IMR-90 (cell line): ENCODE measurements at regions of chr3 and their contacts with region 1.

Region 1: GRCh38 chr3:188154014-188154808 is at the start of gene LPP:
- DNase-seq: peak; percentile 77
- ATAC-seq: peak; percentile 86
- H3K4me3 ChIP-seq: peak within 1 kb of the TSS; percentile 83
- H3K27ac ChIP-seq: peak within 1 kb of the TSS; percentile 97
- H3K4me1 ChIP-seq: peaks cover 30% of the 10 kb centered on the region
- H3K27me3 ChIP-seq: no peaks in the 10 kb centered on the region
- CTCF ChIP-seq: 0 out of 2 replicates have a peak, but pooled peaks have one; percentile 4
- POLR2A ChIP-seq: no peak; the same call in 1 of the 2 replicates
- RAD21 ChIP-seq: peak; percentile 24; the same call in 1 of the 2 replicates
- total RNA-seq, gene LPP: 111 and 130 TPM in 2 replicates

Region 2: DNA sequence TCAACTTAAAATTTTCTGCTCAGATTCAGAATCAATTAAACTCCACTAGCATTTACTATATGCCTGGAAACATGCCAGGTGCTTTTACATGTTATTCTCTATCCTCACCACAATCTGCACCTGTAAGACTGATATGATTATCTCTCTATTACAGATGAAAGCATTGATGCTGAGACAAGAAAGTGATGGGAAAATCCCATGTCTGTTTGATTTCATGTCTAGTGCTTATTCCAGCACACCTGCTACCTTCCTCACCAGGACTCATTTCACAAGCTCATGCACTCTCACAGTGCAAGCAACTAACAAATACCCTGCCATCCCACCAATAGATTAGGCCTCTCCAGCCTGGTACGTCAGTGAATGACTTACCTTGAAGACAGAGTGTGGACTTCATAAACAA is 384.0 kb before region 1 on chr3:
- CTCF ChIA-PET with region 1: no interaction called
- POLR2A ChIA-PET with region 1: no interaction called
- dilution Hi-C with region 1: no loop called
- in situ Hi-C with region 1: no loop called
- intact Hi-C with region 1: no loop called
- DNase-seq: no peak
- ATAC-seq: no peak
- H3K4me3 ChIP-seq: no peak overlapping the region
- H3K27ac ChIP-seq: no peak overlapping the region
- H3K4me1 ChIP-seq: peaks cover 3% of the 10 kb centered on the region; the same call in 1 of the 2 replicates
- H3K27me3 ChIP-seq: no peaks in the 10 kb centered on the region
- CTCF ChIP-seq: no peak
- POLR2A ChIP-seq: no peak
- RAD21 ChIP-seq: no peak

Region 3: DNA sequence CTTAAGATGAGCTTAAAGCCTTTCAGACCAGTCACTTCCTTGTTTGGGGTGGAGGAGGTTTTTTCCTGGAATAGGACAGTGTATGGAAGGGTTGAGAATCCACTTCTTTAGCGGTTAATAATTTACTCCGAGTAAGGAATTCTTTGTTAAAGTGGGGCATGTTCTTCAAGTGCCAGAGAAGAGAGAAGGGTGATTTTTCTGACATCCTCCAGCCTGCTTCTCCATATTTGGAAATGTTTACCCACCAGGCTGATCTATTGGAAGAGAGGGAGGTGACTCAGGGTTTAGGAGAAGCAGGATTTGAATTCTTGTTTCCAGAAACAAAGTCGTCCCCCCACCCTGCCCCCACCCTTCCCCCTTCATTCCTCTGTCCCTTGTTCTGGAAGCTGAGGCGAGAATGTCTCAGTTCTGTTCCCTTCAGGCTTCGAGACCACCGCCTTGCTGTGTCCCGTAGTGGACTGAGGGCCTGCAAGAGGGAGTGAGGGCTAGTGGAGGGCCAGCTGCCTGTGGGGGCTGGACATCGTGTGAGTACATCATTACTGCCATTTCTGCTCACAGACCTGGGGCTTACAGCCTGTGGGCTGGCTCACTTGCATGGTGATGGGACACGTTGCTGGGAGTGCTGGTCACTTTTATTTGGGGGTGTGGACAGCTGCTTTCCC is 58.2 kb after region 1 on chr3:
- CTCF ChIA-PET with region 1: no interaction called
- POLR2A ChIA-PET with region 1: no interaction called
- dilution Hi-C with region 1: no loop called
- in situ Hi-C with region 1: no loop called
- intact Hi-C with region 1: loop called (anchors 2 kb)
- DNase-seq: peak; percentile 89
- ATAC-seq: peak; percentile 67
- H3K4me3 ChIP-seq: peak overlapping the region; percentile 43
- H3K27ac ChIP-seq: peak overlapping the region; percentile 100
- H3K4me1 ChIP-seq: peaks cover 42% of the 10 kb centered on the region
- H3K27me3 ChIP-seq: no peaks in the 10 kb centered on the region
- CTCF ChIP-seq: no peak
- POLR2A ChIP-seq: no peak
- RAD21 ChIP-seq: no peak

Region 4: DNA sequence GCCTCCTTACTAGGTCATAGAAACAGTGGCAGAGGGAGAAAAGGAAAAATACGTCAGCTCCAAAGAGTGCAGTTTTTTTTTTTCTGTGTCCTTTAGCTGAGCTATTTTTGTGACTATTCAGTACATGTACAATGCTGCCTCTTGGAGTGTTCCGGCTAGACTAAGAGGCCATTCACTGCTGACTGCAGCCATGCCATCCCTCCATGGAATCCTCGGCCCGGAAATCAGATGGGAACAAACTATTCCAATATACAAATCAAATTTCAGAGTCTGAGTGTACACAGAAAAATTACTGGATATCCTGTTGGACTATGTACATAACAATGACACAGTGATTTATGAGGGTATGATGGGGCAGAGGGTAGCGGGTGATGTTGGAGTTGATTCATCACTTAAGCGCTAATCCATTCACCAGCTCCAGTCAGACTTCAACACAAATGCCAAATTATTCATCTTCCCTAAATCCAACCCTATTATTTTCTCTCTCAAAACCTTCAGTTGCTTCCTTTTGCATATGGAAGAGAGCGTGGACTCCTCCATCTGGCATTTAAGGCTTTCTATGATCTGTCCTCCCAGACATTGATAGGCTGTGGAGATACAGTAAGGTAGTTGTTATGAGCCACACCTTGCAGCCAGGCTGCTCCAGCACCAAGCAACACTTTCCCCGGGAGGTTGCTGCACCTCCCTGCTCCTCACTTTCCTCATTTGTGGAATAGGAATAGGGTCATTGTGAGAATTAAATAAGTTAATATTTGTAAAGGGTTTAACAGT is 108.9 kb after region 1 on chr3:
- CTCF ChIA-PET with region 1: no interaction called
- POLR2A ChIA-PET with region 1: interaction called, 3 read pairs
- dilution Hi-C with region 1: no loop called
- in situ Hi-C with region 1: no loop called
- intact Hi-C with region 1: loop called (anchors 1 kb)
- DNase-seq: peak; percentile 83
- ATAC-seq: peak; percentile 16
- H3K4me3 ChIP-seq: no peak overlapping the region
- H3K27ac ChIP-seq: peak overlapping the region; percentile 37
- H3K4me1 ChIP-seq: peaks cover 44% of the 10 kb centered on the region
- H3K27me3 ChIP-seq: no peaks in the 10 kb centered on the region
- CTCF ChIP-seq: no peak
- POLR2A ChIP-seq: no peak
- RAD21 ChIP-seq: no peak

Region 5: DNA sequence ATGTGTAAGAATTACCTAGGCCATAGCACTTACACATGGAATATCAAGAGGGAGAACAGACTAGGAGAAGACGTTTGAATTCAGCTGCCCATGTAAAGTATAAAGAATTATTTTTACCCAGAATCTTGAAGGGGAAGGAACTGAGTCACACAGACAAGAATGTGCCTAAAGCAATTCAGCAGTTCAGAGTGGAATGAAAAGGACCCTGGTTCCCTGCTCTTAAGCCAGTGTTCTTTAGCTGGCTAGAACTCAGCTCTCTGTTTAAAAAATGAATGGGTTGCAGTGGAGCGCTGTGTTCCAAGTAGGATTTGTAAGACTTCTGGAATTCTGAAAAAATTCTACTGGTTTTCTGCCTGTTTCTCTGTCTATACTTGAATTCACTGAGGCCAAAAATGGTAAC is 439.9 kb after region 1 on chr3:
- CTCF ChIA-PET with region 1: interaction called, 3 read pairs
- POLR2A ChIA-PET with region 1: no interaction called
- dilution Hi-C with region 1: no loop called
- in situ Hi-C with region 1: no loop called
- intact Hi-C with region 1: loop called (anchors 5 kb)
- DNase-seq: peak; percentile 95
- ATAC-seq: peak; percentile 89
- H3K4me3 ChIP-seq: no peak overlapping the region
- H3K27ac ChIP-seq: peak overlapping the region; percentile 45
- H3K4me1 ChIP-seq: peaks cover 9% of the 10 kb centered on the region
- H3K27me3 ChIP-seq: no peaks in the 10 kb centered on the region
- CTCF ChIP-seq: no peak
- POLR2A ChIP-seq: no peak
- RAD21 ChIP-seq: no peak

Region 6: DNA sequence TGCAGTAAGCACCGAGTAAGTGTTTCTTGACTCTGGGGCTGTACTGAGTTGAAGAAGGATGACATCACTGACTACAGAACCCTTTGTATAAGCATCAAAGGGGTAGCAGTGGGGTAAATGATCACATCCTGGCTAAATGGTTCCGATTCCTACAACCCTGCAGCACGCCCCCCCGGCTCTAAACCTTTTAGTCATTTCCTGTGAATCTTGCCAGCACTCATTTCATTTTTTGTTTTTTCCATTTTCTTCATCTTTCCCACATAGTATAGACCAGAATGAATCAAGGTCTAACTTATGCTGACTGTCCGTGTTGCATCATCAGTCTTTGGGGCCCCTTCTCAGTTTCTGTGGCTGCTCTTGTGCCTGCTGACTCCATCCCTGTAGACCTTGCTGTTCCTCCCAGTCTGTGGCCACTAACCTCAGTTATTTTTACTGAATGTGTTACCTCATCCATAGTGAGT is 634.4 kb after region 1 on chr3:
- CTCF ChIA-PET with region 1: no interaction called
- POLR2A ChIA-PET with region 1: no interaction called
- dilution Hi-C with region 1: no loop called
- in situ Hi-C with region 1: no loop called
- intact Hi-C with region 1: no loop called
- DNase-seq: peak; percentile 97
- ATAC-seq: peak; percentile 96
- H3K4me3 ChIP-seq: no peak overlapping the region
- H3K27ac ChIP-seq: peak overlapping the region; percentile 30; the same call in 1 of the 2 replicates
- H3K4me1 ChIP-seq: peaks cover 11% of the 10 kb centered on the region
- H3K27me3 ChIP-seq: no peaks in the 10 kb centered on the region
- CTCF ChIP-seq: no peak
- POLR2A ChIP-seq: no peak
- RAD21 ChIP-seq: no peak